ENCODE measurements at regions of chr1 and their contacts with region 1.

Region 1: DNA sequence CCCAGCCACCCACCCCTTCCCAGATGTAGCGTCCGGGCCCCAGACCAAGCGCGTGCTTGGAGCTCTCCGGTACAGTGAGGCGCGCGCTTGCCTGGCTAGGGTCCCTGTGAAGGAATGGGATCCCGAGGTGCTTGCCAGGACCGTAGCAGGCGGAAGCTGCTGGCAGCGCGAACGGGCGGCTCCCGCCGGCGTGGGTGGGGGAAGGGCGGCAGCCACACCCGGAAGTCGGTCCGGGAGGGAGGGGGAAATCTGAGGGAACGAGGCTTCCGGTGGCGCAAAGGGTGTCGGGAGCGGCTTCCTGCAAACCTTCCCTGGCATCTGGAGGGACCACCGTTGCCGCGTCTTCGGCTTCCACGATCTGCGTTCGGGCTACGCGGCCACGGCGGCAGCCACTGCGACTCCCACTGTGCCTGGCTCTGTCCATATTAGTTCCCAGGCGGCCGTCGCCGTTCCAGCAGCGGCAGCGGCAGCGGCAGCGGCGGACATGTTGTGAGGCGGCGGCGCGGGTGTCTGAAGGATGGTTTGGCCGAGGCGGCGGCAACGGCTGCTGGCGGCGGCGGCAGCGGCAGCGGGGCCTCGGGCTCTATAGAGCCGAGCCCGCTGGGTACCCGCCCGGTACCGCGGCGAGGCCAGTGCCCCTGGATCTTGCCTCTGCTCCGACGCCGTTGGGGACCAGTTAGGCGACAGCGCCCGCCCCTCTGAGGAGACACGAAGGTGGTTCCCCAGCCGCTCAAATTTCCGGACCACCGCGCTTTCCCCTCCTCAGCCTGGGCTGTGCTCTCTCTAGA is at the start of gene DR1:
- DNase-seq: peak; percentile 95
- H3K4me3 Mint-ChIP-seq: peak within 1 kb of the TSS; percentile 83
- H3K27ac Mint-ChIP-seq: peak within 1 kb of the TSS; percentile 96
- H3K4me1 Mint-ChIP-seq: peaks cover 25% of the 10 kb centered on the region
- H3K27me3 Mint-ChIP-seq: no peaks in the 10 kb centered on the region
- total RNA-seq, gene DR1: 76.3 to 80.3 TPM

Region 2: GRCh38 chr1:92831762-92832536 is 513.9 kb before region 1 on chr1 and contains the start of gene RPL5:
- CTCF ChIA-PET with region 1: no interaction called
- intact Hi-C with region 1: loop called (anchors 2 kb)
- DNase-seq: peak; percentile 98
- H3K4me3 Mint-ChIP-seq: peak within 1 kb of the TSS; percentile 98
- H3K27ac Mint-ChIP-seq: peak within 1 kb of the TSS; percentile 99
- H3K4me1 Mint-ChIP-seq: peaks cover 38% of the 10 kb centered on the region
- H3K27me3 Mint-ChIP-seq: no peaks in the 10 kb centered on the region
- total RNA-seq, gene RPL5: 1,793 to 1,819 TPM

Region 3: GRCh38 chr1:93042187-93043056 is 303.4 kb before region 1 on chr1:
- CTCF ChIA-PET with region 1: no interaction called
- intact Hi-C with region 1: loop called (anchors 1 kb)
- DNase-seq: peak; percentile 38
- H3K4me3 Mint-ChIP-seq: peak overlapping the region; percentile 64
- H3K27ac Mint-ChIP-seq: peak overlapping the region; percentile 85
- H3K4me1 Mint-ChIP-seq: peaks cover 26% of the 10 kb centered on the region
- H3K27me3 Mint-ChIP-seq: no peaks in the 10 kb centered on the region

Region 4: GRCh38 chr1:93447516-93448291 is 101.9 kb after region 1 on chr1 and contains the start of gene FNBP1L:
- CTCF ChIA-PET with region 1: no interaction called
- intact Hi-C with region 1: loop called (anchors 2 kb)
- DNase-seq: peak; percentile 59
- H3K4me3 Mint-ChIP-seq: peak within 1 kb of the TSS; percentile 83
- H3K27ac Mint-ChIP-seq: no peak within 1 kb of the TSS
- H3K4me1 Mint-ChIP-seq: peaks cover 10% of the 10 kb centered on the region
- H3K27me3 Mint-ChIP-seq: peaks cover 43% of the 10 kb centered on the region
- total RNA-seq, gene FNBP1L: 0.17 to 0.21 TPM

Region 5: DNA sequence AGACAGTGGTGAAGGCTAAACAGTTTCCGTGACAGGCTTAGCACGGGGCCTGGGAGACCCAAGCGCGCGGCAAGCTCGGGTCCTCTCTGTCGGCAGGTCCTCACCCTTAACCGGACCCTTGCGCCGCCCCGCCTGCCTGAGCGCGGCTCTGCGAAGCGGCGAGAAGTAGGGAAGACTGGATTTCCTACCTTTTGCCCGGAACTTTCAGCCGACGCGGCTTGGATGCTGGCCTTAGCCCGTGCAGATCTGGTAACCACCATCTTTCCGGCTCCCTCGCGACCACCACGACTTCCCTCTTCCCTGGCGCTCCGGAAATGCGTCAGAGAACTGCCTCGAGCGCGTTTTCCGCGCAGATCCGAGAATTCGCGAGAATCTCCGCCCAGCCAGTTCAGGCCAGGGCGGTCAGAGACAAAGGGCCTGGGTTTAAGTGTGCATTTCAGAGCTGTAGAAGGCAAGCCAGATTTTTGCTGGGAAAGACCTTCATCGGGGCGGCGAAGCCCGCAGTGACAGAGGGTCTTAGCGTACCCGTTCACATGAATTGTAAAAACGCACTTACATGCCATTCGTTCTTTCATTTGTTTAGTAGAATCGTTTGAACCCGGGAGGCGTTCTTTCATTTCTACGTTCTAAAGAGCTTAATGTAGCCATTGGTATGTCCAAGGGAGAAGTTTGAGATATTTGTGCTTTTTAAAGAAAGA is 533.2 kb after region 1 on chr1 and contains the start of gene DNTTIP2:
- CTCF ChIA-PET with region 1: no interaction called
- intact Hi-C with region 1: loop called (anchors 1 kb)
- DNase-seq: peak; percentile 95
- H3K4me3 Mint-ChIP-seq: peak within 1 kb of the TSS; percentile 92
- H3K27ac Mint-ChIP-seq: peak within 1 kb of the TSS; percentile 97
- H3K4me1 Mint-ChIP-seq: peaks cover 42% of the 10 kb centered on the region
- H3K27me3 Mint-ChIP-seq: no peaks in the 10 kb centered on the region
- total RNA-seq, gene DNTTIP2: 58.5 to 64.5 TPM

Region 6: GRCh38 chr1:94417978-94418663 is 1072.3 kb after region 1 on chr1 and contains the start of gene ABCD3:
- CTCF ChIA-PET with region 1: no interaction called
- intact Hi-C with region 1: loop called (anchors 1 kb)
- DNase-seq: peak; percentile 94
- H3K4me3 Mint-ChIP-seq: no peak within 1 kb of the TSS
- H3K27ac Mint-ChIP-seq: peak within 1 kb of the TSS; percentile 43
- H3K4me1 Mint-ChIP-seq: peaks cover 35% of the 10 kb centered on the region
- H3K27me3 Mint-ChIP-seq: no peaks in the 10 kb centered on the region
- total RNA-seq, gene ABCD3: 29.2 to 30.8 TPM

Measured in activated naive CD4-positive, alpha-beta T cell treated with anti-CD3 and anti-CD28 coated beads for 36 hours (primary cell).